HepG2 (cell line): ENCODE measurements at regions of chr6 and their contacts with region 1.

Region 1: GRCh38 chr6:109705258-109705657 is 14.2 kb downstream of the FIG4 start:
- DNase-seq: peak; percentile 78
- ATAC-seq: peak; percentile 97
- H3K4me3 ChIP-seq: no peak overlapping the region
- H3K27ac ChIP-seq: no peak overlapping the region
- H3K4me1 ChIP-seq: no peaks in the 10 kb centered on the region
- H3K27me3 ChIP-seq: no peaks in the 10 kb centered on the region
- CTCF ChIP-seq: peak; percentile 96
- EP300 ChIP-seq: no peak
- POLR2A ChIP-seq: no peak
- RAD21 ChIP-seq: peak; percentile 91

Region 2: DNA sequence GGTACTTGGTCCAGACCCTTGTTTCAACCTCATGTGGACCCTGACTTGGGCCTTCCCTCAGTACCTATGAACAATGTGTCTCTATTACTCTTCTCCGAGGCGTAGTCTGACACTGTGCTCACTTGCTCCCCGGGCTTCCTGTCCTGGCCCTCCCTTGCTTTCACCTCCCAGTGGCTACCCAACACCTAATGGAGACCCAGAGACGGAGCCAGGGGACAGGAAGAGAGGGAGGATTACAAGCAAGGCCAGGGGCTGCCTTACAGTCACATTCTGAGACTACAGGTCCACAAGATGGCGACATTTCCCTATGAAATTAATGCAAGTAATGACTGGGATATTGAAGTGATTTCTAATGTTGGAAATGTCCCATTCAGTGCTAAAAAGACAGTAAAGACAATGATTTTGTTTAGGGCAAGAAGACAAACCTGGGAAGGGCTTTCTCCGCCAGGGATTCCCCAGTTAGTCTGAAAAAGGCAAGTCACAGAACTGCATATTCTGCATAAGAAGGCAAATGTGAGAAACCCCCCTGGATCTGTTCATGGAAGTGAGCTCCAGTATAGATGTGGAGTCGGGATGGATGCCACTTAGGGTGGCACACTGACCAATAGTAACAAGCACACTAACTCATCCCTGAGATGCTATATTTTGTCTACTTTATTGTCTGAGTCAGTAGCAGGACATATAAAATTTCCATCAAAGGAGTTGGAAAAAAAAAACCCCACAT is 178.2 kb before region 1 on chr6:
- CTCF ChIA-PET with region 1: interaction called, 7 read pairs
- POLR2A ChIA-PET with region 1: no interaction called
- in situ Hi-C with region 1: no loop called
- intact Hi-C with region 1: loop called (anchors 1 kb)
- DNase-seq: peak; percentile 65
- ATAC-seq: peak; percentile 97
- H3K4me3 ChIP-seq: no peak overlapping the region; a peak in 1 of 6 replicates
- H3K27ac ChIP-seq: no peak overlapping the region
- H3K4me1 ChIP-seq: no peaks in the 10 kb centered on the region
- H3K27me3 ChIP-seq: no peaks in the 10 kb centered on the region
- CTCF ChIP-seq: peak; percentile 86
- EP300 ChIP-seq: no peak
- POLR2A ChIP-seq: no peak
- RAD21 ChIP-seq: peak; percentile 31; the same call in 1 of the 2 replicates

Region 3: GRCh38 chr6:109595998-109596397 is 109.3 kb before region 1 on chr6:
- CTCF ChIA-PET with region 1: interaction called, 10 read pairs
- POLR2A ChIA-PET with region 1: no interaction called
- in situ Hi-C with region 1: no loop called
- intact Hi-C with region 1: no loop called
- DNase-seq: peak; percentile 26
- ATAC-seq: peak; percentile 67
- H3K4me3 ChIP-seq: no peak overlapping the region
- H3K27ac ChIP-seq: no peak overlapping the region
- H3K4me1 ChIP-seq: no peaks in the 10 kb centered on the region
- H3K27me3 ChIP-seq: no peaks in the 10 kb centered on the region
- CTCF ChIP-seq: peak; percentile 44
- EP300 ChIP-seq: no peak
- POLR2A ChIP-seq: no peak
- RAD21 ChIP-seq: no peak

Region 4: DNA sequence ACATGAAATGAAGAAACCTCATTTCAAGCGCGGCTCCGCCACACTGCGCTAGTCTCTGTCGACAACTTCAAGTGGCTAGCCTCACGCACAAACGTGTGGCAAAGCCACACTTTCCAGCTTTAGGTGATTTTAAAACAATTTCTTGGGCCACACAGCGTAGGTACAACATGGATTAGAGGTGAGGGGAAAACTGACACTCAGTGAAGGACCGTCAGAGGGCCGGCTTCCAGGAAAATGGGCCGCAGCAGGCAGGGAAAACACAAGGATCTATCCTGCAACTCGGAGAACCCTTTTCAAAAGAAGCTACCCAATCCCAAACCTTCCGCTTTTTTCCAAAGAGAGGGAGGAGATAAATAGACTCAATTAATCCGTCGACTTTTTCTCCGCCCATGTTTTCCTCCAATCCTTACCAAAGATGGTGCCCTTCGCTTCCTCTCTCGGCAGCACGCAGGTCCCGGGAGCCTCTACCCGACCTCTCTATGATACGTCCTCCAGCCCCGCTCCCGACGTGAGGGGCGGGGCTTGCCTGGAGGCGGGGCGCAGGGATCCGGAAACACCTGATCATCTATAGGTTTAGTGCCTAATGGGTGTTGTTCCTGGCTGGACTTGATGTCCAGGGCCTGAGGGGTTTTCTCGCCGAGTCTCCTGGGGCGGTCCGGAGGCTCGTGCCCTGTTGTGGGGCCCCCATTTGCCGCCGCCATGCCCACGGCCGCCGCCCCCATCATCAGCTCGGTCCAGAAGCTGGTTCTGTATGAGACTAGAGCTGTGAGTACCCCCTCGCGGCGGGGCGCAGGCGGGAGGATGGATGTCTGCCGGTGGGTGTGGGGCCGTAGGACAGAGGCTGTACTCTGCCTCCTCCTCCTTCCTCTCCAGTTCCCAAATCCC is 14.3 kb before region 1 on chr6 and contains the starts of genes AK9 and FIG4:
- CTCF ChIA-PET with region 1: no interaction called
- POLR2A ChIA-PET with region 1: no interaction called
- in situ Hi-C with region 1: no loop called
- intact Hi-C with region 1: no loop called
- DNase-seq: peak; percentile 89
- ATAC-seq: peak; percentile 99
- H3K4me3 ChIP-seq: peak within 1 kb of the TSS; percentile 80 to 90 (median 86)
- H3K27ac ChIP-seq: peak within 1 kb of the TSS; percentile 75
- H3K4me1 ChIP-seq: peaks cover 21% of the 10 kb centered on the region
- H3K27me3 ChIP-seq: no peaks in the 10 kb centered on the region
- CTCF ChIP-seq: peak; percentile 75
- EP300 ChIP-seq: no peak
- POLR2A ChIP-seq: peak; percentile 57 to 67
- RAD21 ChIP-seq: no peak; the same call in 1 of the 2 replicates
- total RNA-seq, gene AK9: 4.8 and 7.1 TPM in 2 replicates
- total RNA-seq, gene FIG4: 7.9 and 10.3 TPM in 2 replicates

Region 5: DNA sequence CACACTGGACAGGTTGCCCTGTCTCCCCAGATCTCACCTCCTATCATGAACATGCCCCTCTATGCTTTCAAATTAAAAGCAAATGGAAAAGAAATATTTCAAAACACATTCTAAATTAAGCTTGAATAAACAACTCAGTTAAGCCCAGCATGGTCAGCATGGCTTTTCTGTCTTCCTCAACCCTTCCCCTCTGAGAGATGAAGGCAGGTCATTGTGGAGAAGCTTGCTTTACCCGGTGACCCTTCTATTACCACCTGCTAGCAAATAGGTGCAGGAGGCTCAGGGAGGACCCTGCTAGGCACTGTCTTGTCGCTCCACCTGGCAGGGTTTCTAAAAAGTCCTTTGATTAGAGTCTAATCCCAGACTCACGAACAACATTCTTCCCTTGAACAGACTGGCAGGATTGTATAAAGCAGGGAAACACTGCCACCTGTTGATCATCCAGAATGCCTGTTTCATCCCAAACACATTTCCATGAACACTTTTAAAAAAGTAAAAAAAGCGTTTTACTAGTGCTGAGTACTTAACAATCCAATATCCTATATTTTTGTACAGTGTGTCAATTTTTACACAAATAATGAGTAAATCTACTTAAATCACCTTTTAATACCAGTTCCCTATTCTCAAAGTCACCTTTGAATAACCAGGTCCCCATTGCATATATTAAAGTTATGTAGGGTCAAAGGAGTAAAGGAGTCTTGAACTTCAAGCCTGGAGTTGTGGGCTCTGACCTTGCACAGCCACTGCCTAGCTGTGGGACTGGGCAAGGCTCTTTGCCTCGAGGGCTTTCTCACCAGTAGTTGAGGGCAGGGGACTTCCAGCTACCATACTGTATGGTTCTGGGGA is 348.4 kb after region 1 on chr6:
- CTCF ChIA-PET with region 1: interaction called, 47 read pairs
- POLR2A ChIA-PET with region 1: no interaction called
- in situ Hi-C with region 1: loop called (anchors 5 kb)
- intact Hi-C with region 1: loop called (anchors 1 kb)
- DNase-seq: peak; percentile 36
- ATAC-seq: peak; percentile 71
- H3K4me3 ChIP-seq: no peak overlapping the region
- H3K27ac ChIP-seq: no peak overlapping the region
- H3K4me1 ChIP-seq: peaks cover 10% of the 10 kb centered on the region; the same call in 1 of the 2 replicates
- H3K27me3 ChIP-seq: peaks cover 1 to 22% of the 10 kb centered on the region in 2 experiments; a peak in 3 of 5 replicates
- CTCF ChIP-seq: peak; percentile 72
- EP300 ChIP-seq: no peak
- POLR2A ChIP-seq: no peak
- RAD21 ChIP-seq: peak; percentile 37; the same call in 1 of the 2 replicates

Region 6: GRCh38 chr6:110389689-110390382 is 684.6 kb after region 1 on chr6:
- CTCF ChIA-PET with region 1: interaction called, 23 read pairs
- POLR2A ChIA-PET with region 1: no interaction called
- in situ Hi-C with region 1: loop called (anchors 10 kb)
- intact Hi-C with region 1: loop called (anchors 1 kb)
- DNase-seq: no peak
- ATAC-seq: no peak
- H3K4me3 ChIP-seq: no peak overlapping the region
- H3K27ac ChIP-seq: no peak overlapping the region
- H3K4me1 ChIP-seq: peaks cover 46% of the 10 kb centered on the region
- H3K27me3 ChIP-seq: no peaks in the 10 kb centered on the region
- CTCF ChIP-seq: no peak
- EP300 ChIP-seq: no peak
- POLR2A ChIP-seq: no peak
- RAD21 ChIP-seq: no peak